SK-N-SH (cell line): ENCODE measurements at regions of chr11 and their contacts with region 1.

Region 1: DNA sequence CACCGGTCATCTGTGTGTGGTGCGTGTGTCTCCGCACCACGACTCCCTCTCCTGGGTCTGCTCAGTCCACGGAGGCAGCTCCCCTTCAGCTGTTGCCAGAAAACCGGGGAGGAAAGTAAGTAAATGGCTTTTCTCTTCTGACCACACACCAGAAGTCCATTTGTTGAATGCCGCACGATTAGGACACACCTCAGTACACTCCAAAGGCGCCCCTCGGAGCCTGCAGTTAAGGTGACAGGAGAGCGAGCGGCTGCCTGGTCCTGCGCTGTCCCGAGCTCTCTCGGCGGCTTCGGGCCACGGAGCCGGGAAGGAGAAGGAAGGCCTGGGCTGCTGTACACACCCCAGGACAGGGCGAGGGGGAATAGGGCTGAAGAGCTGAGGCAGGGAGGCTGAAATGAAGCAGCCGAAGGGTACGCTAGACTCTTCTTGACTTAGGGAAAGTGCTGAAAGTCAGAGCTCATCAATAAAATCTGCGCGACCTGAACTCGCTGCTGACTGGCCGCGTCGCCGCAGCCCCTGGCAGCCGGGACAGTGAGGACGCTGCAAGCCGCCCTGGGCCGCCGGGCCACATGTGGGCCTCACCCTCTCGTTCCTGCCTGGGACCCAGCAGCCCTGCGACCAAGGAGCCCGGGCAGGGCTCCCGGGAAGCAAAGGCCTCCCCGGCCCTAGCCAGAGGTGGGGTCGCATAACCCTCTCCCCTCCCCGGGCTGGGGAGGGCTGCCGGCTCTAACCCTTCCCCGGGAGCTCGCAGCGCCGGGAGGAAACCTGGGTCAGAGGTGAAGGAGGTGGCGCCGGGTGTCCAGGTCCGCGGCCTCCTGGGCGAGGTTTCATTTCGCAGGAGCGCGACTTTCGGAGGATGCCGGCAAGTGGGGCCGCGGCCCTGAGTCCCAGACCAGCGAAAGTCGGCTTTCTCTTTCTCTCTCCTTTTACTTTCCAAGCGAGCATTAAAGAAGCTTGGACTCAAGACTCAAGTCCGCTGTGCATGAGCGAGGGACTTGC is 1.6 kb upstream of the PAX6 start:
- DNase-seq: peak; percentile 62
- H3K4me3 ChIP-seq: peak overlapping the region; percentile 24 to 37; a peak in 3 of 4 replicates
- H3K27ac ChIP-seq: no peak overlapping the region
- H3K4me1 ChIP-seq: peaks cover 6 to 30% of the 10 kb centered on the region in 2 experiments; a peak in 2 of 4 replicates
- H3K27me3 ChIP-seq: peaks cover 98% of the 10 kb centered on the region
- CTCF ChIP-seq: no peak
- EP300 ChIP-seq: no peak
- RAD21 ChIP-seq: no peak

Region 2: DNA sequence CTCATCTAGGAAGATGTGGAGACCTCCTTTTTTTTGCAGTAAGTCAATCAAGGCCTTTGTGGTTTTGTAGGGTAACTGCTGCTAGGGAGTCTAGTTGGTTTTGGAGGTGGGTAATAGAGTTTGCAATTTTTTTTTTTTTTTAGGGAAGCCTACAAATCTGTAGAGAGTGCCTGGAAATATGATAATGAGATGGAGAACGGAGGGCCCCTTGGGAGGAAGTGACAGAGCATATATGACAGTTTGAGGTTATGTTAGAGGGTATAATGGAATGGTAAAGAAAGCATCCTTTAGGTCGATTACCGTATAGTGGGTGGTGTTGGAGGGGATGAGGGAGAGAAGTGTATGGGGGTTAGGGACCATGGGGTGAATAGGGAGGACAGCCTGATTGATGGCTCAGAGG is 204.8 kb before region 1 on chr11:
- CTCF ChIA-PET with region 1: no interaction called
- POLR2A ChIA-PET with region 1: no interaction called
- DNase-seq: no peak
- H3K4me3 ChIP-seq: no peak overlapping the region
- H3K27ac ChIP-seq: no peak overlapping the region
- H3K4me1 ChIP-seq: peaks cover 0 to 4% of the 10 kb centered on the region in 2 experiments; a peak in 1 of 4 replicates
- H3K27me3 ChIP-seq: no peaks in the 10 kb centered on the region
- CTCF ChIP-seq: no peak
- EP300 ChIP-seq: no peak
- RAD21 ChIP-seq: no peak

Region 3: DNA sequence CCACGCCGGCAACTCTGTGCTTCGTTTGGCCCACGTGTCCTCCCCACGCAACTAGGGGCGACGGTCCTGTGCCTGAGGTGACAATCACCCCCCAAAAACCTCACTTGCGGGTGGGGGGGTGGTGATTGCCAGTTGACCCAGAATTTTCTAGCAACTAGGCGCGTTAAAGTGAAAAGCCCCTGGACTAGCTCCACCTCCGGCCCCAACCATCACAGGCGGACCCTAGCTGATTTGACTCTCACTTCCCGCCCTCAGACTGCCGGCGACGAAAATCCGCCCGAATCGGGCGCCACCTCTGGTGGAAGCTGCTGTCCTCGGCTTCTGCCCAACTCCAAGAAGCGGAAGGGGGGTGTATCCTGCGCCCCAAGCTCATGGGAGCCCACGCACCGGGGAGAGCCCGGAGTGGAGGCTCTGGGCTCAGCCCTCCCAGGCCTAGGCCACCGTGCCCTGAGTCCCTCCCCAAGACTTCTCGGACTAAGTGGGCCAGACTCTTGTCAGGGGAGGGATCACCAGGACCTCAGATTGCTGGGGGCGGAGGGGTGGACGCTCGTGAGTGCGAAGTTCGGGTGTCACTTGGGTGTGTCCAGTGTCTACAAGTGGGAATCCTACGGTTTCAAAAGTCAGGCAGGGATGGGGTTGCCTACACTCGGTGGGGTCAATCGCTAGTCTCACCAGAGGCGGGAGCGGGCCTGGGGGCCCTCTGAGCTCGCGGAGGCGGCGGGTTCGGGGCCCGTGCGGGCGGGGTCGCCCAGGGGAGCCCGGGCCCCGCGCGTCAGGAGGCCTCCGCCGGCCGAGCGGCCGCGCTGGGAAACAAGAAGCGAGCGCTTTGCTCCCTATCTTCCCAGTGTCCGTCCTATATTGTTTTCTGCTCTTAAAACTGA is 13.9 kb before region 1 on chr11:
- CTCF ChIA-PET with region 1: interaction called, 10 read pairs
- POLR2A ChIA-PET with region 1: interaction called, 3 read pairs
- DNase-seq: peak; percentile 67
- H3K4me3 ChIP-seq: peak overlapping the region in 1 of 2 experiments; percentile 29; a peak in 2 of 4 replicates
- H3K27ac ChIP-seq: no peak overlapping the region
- H3K4me1 ChIP-seq: peaks cover 0 to 3% of the 10 kb centered on the region in 2 experiments; a peak in 1 of 4 replicates
- H3K27me3 ChIP-seq: peaks cover 81% of the 10 kb centered on the region
- CTCF ChIP-seq: peak; percentile 54
- EP300 ChIP-seq: no peak
- RAD21 ChIP-seq: no peak